ENCODE measurements at regions of chr14 and their contacts with region 1.

Region 1: GRCh38 chr14:96445844-96446710 is 54.1 kb downstream of the AK7 start:
- DNase-seq: no peak
- H3K4me3 ChIP-seq: no peak overlapping the region
- H3K27ac ChIP-seq: no peak overlapping the region
- H3K4me1 ChIP-seq: no peaks in the 10 kb centered on the region
- H3K27me3 ChIP-seq: no peaks in the 10 kb centered on the region
- CTCF ChIP-seq: no peak

Region 2: GRCh38 chr14:96554315-96554910 is 108.3 kb after region 1 on chr14:
- CTCF ChIA-PET with region 1: no interaction called
- POLR2A ChIA-PET with region 1: interaction called, 13 read pairs
- intact Hi-C with region 1: no loop called
- DNase-seq: no peak
- H3K4me3 ChIP-seq: no peak overlapping the region
- H3K27ac ChIP-seq: no peak overlapping the region
- H3K4me1 ChIP-seq: peaks cover 7% of the 10 kb centered on the region
- H3K27me3 ChIP-seq: no peaks in the 10 kb centered on the region
- CTCF ChIP-seq: no peak